ENCODE measurements at regions of chr6 and their contacts with region 1.

Region 1: DNA sequence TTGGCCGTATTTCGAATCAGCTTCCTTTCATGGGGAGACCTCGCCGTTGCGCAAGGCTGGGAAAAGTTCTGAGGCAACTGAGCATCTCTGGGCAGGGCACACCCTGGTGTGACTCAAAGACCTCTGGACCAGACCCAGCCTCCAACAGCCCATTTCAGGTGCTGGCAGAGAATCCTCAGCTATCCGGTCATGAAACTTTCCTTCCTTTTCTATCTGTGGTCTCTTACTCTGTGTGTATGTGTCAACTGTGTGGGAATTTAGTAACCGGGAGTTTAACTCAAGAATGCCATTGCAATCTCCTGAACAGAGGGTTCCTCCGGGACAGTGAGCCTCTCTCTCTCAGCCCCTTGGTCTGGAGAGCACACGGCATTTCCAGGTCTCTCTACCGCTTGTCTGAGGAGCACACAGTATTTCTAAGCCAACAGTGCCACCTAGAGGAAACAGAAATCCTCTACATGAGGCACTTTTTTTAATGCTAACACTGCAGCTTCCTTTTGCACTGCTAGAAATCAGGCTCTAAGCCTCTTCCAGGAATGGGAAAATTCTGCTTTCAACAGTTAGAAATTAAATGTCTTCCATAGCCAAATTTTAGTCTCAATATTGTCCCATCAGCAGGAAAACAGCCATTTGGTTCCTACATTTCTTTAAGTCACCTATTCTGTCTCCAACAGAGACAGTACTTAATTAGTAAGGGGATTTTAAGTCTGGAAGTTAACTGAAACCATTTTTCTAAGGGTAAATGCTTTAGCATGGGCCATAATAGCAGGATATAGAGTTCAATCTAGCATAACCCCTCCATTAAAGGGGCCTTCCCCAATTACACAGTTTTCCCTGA is 32.7 kb downstream of the PLN start:
- DNase-seq: no peak

Region 2: DNA sequence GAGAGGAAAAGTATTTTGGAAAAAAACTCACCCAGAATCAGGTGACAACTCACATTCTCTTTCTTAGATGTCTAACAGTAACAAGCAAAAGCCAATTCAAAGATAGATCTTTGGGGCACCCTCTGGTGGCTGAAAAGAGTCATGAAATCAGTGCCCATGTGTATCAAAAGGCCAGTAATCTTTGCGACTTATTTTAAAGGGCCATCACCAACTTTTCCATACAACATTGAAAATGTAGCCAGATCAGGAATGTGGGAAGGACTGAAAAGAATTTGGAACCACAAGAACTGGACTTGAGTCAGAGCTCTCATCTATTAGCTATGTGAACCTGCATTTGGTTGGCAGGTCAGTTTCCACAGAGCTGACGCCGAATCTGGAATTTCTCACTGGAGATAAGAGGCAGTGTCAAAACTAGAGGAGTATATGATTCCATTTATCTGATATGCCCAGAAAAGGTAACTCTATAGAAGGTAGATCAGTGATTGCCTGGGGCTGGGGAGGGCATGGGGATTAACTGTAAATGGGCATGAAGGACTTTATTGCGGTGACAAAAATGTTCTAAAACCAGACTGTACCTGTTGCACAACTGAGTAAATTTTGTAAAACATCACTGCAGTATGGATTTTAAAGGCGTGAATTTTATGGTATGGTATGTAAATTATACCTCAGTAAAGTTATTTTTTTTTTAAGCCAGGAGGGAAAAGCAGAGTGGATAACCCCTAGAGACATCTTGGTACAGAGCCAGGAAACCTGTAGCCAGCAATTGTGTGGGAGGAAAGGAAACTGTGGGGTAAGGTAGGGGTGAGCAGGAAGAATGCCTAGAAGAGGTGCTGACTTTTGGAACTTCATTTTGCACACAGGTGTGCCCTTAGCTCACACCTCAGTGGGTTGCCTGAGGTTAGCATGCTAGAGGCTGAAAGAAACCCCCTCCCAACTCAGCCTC is 196.1 kb after region 1 on chr6:
- intact Hi-C with region 1: loop called (anchors 10 kb)
- DNase-seq: no peak

Region 3: DNA sequence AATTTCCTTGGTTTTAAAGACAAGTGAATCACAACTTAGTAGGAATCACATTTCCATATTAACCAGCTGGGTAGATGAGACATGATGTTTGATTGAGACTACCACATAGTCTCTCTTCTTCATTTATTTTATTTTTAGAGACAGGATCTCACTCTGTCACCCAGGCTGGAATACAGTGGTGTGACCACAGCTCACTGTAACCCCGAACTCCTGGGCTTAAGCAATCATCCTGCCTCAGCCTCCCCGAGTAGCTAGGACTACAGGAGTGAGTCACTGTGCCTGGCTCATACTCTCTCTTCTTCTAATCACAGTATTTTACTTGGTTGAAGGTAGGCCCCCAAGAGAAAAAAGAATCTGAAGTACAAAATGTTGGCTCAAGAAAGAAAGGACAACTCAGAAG is 233.0 kb after region 1 on chr6:
- intact Hi-C with region 1: no loop called
- DNase-seq: no peak

Measured in cardiac septum (tissue), 1 donor.